Activated B cell treated with CpG ODN at 0.5 μM for 24 hours (primary cell): ENCODE measurements at regions of chr1 and their contacts with region 1.

Region 1: GRCh38 chr1:248752161-248753028 is 3.2 kb downstream of the LYPD8 start:
- DNase-seq: no peak
- ATAC-seq: peak; percentile 31
- H3K4me3 Mint-ChIP-seq: no peak overlapping the region
- H3K27ac Mint-ChIP-seq: peak overlapping the region; percentile 16
- H3K4me1 Mint-ChIP-seq: peaks cover 16% of the 10 kb centered on the region
- H3K27me3 Mint-ChIP-seq: no peaks in the 10 kb centered on the region
- CTCF ChIP-seq: no peak

Region 2: GRCh38 chr1:248215880-248216279 is 536.5 kb before region 1 on chr1:
- CTCF ChIA-PET with region 1: no interaction called
- POLR2A ChIA-PET with region 1: no interaction called
- intact Hi-C with region 1: no loop called
- DNase-seq: no peak
- ATAC-seq: no peak
- H3K4me3 Mint-ChIP-seq: no peak overlapping the region
- H3K27ac Mint-ChIP-seq: no peak overlapping the region
- H3K4me1 Mint-ChIP-seq: no peaks in the 10 kb centered on the region
- H3K27me3 Mint-ChIP-seq: no peaks in the 10 kb centered on the region
- CTCF ChIP-seq: no peak

Region 3: DNA sequence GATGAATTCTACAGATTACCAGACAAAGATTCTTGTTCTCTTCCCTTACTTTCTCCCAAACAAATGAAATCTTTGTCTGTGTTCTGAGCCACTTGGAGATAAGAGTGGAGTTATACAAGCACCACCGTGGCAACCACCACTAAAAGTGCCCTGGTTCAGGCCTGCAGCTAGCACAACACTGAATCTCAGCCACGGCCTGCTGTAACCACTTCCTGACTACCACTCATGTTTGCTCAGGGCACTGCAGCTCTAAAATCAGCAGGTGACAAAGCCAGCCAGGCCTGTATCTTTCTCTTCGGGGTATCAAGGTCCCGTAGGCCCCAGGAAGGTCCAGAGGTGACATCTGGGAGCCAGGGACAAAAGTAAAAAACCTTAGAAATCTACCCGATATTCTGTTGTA is 380.0 kb before region 1 on chr1:
- CTCF ChIA-PET with region 1: no interaction called
- POLR2A ChIA-PET with region 1: no interaction called
- intact Hi-C with region 1: no loop called
- DNase-seq: no peak
- ATAC-seq: no peak
- H3K4me3 Mint-ChIP-seq: no peak overlapping the region
- H3K27ac Mint-ChIP-seq: no peak overlapping the region
- H3K4me1 Mint-ChIP-seq: no peaks in the 10 kb centered on the region
- H3K27me3 Mint-ChIP-seq: peaks cover 7% of the 10 kb centered on the region
- CTCF ChIP-seq: no peak

Region 4: GRCh38 chr1:248585266-248585665 is 167.1 kb before region 1 on chr1:
- CTCF ChIA-PET with region 1: no interaction called
- POLR2A ChIA-PET with region 1: no interaction called
- intact Hi-C with region 1: no loop called
- DNase-seq: no peak
- ATAC-seq: no peak
- H3K4me3 Mint-ChIP-seq: no peak overlapping the region
- H3K27ac Mint-ChIP-seq: no peak overlapping the region
- H3K4me1 Mint-ChIP-seq: peaks cover 3% of the 10 kb centered on the region
- H3K27me3 Mint-ChIP-seq: peaks cover 5% of the 10 kb centered on the region
- CTCF ChIP-seq: no peak

Region 5: GRCh38 chr1:248793592-248793991 is 41.2 kb after region 1 on chr1:
- CTCF ChIA-PET with region 1: no interaction called
- POLR2A ChIA-PET with region 1: no interaction called
- intact Hi-C with region 1: loop called (anchors 5 kb)
- DNase-seq: no peak
- ATAC-seq: no peak
- H3K4me3 Mint-ChIP-seq: no peak overlapping the region
- H3K27ac Mint-ChIP-seq: peak overlapping the region; percentile 93
- H3K4me1 Mint-ChIP-seq: peaks cover 45% of the 10 kb centered on the region
- H3K27me3 Mint-ChIP-seq: no peaks in the 10 kb centered on the region
- CTCF ChIP-seq: no peak